MCF 10A (cell line): ENCODE measurements at regions of chr13 and their contacts with region 1.

Region 1: DNA sequence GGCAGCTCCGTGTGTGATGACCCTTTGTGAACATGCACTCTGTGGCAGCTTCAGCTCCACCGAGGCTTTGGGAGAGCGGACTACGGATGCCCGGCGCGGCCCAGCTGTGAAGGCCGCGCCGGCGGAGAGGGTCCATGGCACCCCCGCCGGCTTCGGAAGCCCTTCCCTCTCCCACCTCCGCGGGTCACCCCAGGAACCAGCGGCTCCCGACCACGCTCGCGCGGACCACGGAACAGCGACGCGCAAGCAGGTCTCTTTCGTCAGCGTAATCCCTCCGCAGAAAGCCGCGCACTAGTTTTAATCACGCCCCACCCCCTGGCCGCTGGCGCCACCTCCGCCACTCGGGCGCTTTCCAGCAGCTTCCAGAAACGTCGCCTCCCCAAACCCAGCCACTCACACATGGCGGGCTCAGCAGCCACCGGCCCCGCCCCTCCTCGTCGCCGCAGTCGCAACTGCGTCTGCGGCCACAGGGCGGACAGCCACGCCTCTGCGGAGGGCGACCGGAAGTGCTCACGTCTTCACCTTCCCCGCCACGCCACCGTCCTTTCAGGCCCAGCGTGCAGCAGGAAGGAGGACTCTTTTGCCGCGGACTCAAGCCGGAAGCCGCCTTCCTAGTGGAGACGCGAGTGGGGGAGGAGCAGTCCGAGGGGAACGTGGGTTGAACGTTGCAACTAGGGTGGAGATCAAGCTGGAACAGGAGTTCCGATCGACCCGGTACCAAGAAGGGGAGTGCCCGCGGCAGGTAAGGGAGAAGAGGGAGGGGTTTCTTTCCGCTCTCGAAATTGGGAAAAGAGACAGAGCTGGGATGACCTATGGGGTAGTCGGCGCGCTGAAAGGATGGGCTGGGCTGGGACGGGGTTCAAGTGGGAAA is at the start of gene USPL1:
- DNase-seq: peak; percentile 97
- H3K4me3 Mint-ChIP-seq: no peak within 1 kb of the TSS
- H3K27ac Mint-ChIP-seq: no peak within 1 kb of the TSS
- H3K4me1 Mint-ChIP-seq: peaks cover 20% of the 10 kb centered on the region
- H3K27me3 Mint-ChIP-seq: no peaks in the 10 kb centered on the region
- CTCF ChIP-seq: no peak
- total RNA-seq, gene USPL1: 9.8 and 11.8 TPM in 2 replicates

Region 2: GRCh38 chr13:30132623-30133553 is 484.7 kb before region 1 on chr13:
- CTCF ChIA-PET with region 1: interaction called, 3 read pairs
- POLR2A ChIA-PET with region 1: interaction called, 14 read pairs
- intact Hi-C with region 1: no loop called
- DNase-seq: peak; percentile 91
- H3K4me3 Mint-ChIP-seq: no peak overlapping the region
- H3K27ac Mint-ChIP-seq: peak overlapping the region; percentile 20
- H3K4me1 Mint-ChIP-seq: peaks cover 18% of the 10 kb centered on the region
- H3K27me3 Mint-ChIP-seq: no peaks in the 10 kb centered on the region
- CTCF ChIP-seq: peak; percentile 89

Region 3: GRCh38 chr13:30422054-30422839 is 195.3 kb before region 1 on chr13 and contains the start of gene UBE2L5:
- CTCF ChIA-PET with region 1: interaction called, 3 read pairs
- POLR2A ChIA-PET with region 1: interaction called, 22 read pairs
- intact Hi-C with region 1: no loop called
- DNase-seq: peak; percentile 76
- H3K4me3 Mint-ChIP-seq: peak within 1 kb of the TSS; percentile 73
- H3K27ac Mint-ChIP-seq: peak within 1 kb of the TSS; percentile 47
- H3K4me1 Mint-ChIP-seq: peaks cover 7% of the 10 kb centered on the region
- H3K27me3 Mint-ChIP-seq: no peaks in the 10 kb centered on the region
- CTCF ChIP-seq: no peak
- total RNA-seq, gene UBE2L5: not detected in 2 replicates

Region 4: DNA sequence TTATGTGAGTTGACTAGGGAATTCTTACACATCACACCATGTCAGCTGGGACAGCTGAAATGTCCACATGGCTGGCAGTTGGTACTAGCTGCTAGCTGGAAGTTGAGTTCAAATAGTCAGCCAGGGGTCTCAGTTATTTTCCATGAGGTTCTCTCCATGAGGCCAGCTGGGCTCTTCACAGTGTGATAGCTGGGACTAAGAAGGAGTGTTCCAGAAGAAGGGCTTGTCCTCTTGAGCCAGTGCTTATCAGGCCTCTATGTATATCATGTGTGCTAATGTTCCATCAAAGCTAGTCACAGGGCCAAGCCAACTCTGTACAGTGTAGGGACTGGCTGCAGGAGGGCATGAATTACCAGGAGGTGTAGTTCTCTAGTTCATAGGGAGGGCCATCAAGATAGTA is 12.0 kb after region 1 on chr13:
- CTCF ChIA-PET with region 1: interaction called, 3 read pairs
- POLR2A ChIA-PET with region 1: interaction called, 20 read pairs
- intact Hi-C with region 1: no loop called
- DNase-seq: no peak
- H3K4me3 Mint-ChIP-seq: no peak overlapping the region
- H3K27ac Mint-ChIP-seq: no peak overlapping the region
- H3K4me1 Mint-ChIP-seq: peaks cover 1% of the 10 kb centered on the region
- H3K27me3 Mint-ChIP-seq: no peaks in the 10 kb centered on the region
- CTCF ChIP-seq: no peak

Region 5: DNA sequence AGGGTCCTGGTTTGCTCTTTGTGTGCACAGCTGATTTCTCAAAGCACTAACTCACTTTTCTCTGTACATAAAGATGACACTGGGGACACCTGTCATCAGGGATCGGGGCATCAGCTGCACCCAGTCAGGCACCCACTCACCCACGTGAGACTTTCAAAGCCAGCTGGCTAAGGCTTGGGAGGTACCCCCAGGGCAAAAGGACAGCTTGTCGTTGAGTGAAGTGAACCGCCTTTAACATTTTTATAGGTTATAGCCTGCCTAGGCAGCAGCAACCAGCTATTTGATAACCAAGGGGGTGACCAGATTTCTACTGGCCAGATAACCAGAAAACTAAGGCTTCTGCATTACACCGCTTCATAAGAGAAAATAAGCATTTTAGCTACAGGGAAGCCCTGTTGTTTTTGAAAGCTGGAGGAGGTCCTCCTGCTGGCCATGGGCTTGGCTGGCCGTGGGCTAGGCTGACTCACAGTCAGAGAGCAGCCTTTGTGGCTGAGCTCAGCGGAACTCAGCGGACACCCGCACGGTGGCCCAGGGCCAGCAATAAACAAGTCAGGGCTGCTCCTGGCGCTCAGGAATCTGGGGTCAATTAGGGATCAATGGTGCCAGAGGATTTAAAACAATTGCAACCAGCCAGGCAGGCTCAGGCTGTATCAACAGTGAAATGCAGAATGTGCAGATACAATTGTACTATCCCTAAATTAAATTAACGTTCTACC is 174.9 kb after region 1 on chr13:
- CTCF ChIA-PET with region 1: interaction called, 3 read pairs
- POLR2A ChIA-PET with region 1: interaction called, 54 read pairs
- intact Hi-C with region 1: loop called (anchors 2 kb)
- DNase-seq: peak; percentile 92
- H3K4me3 Mint-ChIP-seq: no peak overlapping the region
- H3K27ac Mint-ChIP-seq: no peak overlapping the region
- H3K4me1 Mint-ChIP-seq: peaks cover 22% of the 10 kb centered on the region
- H3K27me3 Mint-ChIP-seq: no peaks in the 10 kb centered on the region
- CTCF ChIP-seq: peak; percentile 42

Region 6: GRCh38 chr13:31044377-31045285 is 427.1 kb after region 1 on chr13:
- CTCF ChIA-PET with region 1: interaction called, 6 read pairs
- POLR2A ChIA-PET with region 1: interaction called, 27 read pairs
- intact Hi-C with region 1: loop called (anchors 2 kb)
- DNase-seq: peak; percentile 81
- H3K4me3 Mint-ChIP-seq: no peak overlapping the region
- H3K27ac Mint-ChIP-seq: peak overlapping the region; percentile 90
- H3K4me1 Mint-ChIP-seq: peaks cover 15% of the 10 kb centered on the region
- H3K27me3 Mint-ChIP-seq: no peaks in the 10 kb centered on the region
- CTCF ChIP-seq: peak; percentile 84